CD8-positive, alpha-beta T cell (primary cell): ENCODE measurements at regions of chr4 and their contacts with region 1.

Region 1: DNA sequence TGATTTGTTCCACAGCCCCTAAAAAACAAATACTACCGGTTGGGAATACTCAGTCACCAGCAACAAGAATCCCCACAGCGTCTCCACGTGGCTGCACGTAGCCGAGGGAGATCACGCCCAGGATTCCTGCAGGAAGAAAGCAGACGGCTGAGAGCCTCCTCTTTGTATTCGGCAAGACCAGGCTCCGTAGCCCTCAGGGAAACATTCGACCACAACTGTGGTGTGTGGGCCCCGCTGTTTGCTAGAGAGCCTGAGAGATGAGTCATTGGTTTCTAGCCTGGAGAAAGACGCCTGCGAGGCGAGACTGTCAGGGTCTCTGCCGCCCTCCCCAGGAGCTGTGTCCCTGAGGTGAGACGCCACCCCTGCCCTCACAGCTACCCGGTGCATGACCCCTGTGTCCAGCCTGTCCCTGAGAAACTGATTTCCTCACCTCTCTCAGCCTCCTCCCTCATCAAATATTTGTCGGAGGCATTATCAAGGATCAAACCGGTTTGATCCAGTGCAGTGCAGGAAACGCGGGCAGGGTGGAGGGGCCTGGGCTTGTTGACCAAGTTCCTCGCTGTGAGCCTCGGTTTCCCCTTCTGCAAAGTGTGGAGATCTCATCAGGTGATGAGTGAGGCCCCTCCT is 4.7 kb upstream of the S100P start:
- DNase-seq: peak; percentile 53 to 89 (median 81)
- ATAC-seq: peak; percentile 79
- H3K4me3 ChIP-seq: peak overlapping the region; percentile 50 to 58
- H3K4me3 Mint-ChIP-seq: peak overlapping the region; percentile 82
- H3K27ac ChIP-seq: peak overlapping the region; percentile 58 to 75
- H3K27ac Mint-ChIP-seq: peak overlapping the region; percentile 94
- H3K4me1 ChIP-seq: peaks cover 61% of the 10 kb centered on the region
- H3K4me1 Mint-ChIP-seq: peaks cover 75% of the 10 kb centered on the region
- H3K27me3 ChIP-seq: no peaks in the 10 kb centered on the region
- H3K27me3 Mint-ChIP-seq: no peaks in the 10 kb centered on the region
- CTCF ChIP-seq: no peak

Region 2: DNA sequence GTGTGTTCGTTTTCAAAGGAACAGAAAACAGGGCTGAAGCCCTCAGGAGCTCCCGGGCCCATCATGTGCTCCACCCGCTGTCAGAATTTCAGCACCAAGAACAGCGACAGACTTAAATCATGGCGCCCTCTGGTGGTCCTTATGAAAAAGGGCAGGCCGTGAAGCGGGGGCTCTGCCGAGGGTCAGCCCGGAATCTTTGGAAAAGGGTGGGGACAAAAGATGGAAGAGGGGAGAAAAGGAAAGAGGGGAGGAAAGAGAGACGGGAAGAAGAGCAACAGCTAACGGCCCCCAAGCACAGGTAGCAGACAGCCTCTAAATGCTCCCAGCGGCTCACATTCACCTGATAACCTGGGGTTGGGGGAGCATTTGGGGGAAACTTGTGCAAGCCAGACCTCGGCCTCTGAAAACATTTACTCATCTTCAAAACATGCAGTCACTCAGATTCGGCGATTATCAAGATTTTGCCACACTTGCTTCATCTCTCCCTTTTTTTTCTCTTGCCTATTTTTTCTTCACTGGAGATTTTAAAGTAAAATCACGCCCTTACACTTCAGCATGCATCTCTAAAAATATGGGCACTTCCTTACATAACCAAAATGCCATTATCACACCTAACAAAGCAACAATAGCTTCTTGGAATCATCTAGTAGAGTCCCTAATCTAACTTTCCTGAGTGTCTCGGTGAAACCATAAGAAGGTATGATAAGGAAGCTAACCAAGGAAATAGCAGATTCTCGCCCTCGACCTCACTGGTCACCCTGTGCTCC is 142.1 kb before region 1 on chr4:
- CTCF ChIA-PET with region 1: no interaction called
- POLR2A ChIA-PET with region 1: no interaction called
- intact Hi-C with region 1: no loop called
- DNase-seq: peak in 8 of 9 experiments; percentile 28 to 80 (median 51)
- ATAC-seq: peak; percentile 69
- H3K4me3 ChIP-seq: no peak overlapping the region
- H3K4me3 Mint-ChIP-seq: no peak overlapping the region
- H3K27ac ChIP-seq: no peak overlapping the region
- H3K27ac Mint-ChIP-seq: no peak overlapping the region
- H3K4me1 ChIP-seq: no peaks in the 10 kb centered on the region
- H3K4me1 Mint-ChIP-seq: no peaks in the 10 kb centered on the region
- H3K27me3 ChIP-seq: peaks cover 0 to 2% of the 10 kb centered on the region in 2 experiments
- H3K27me3 Mint-ChIP-seq: peaks cover 45% of the 10 kb centered on the region
- CTCF ChIP-seq: peak; percentile 85

Region 3: DNA sequence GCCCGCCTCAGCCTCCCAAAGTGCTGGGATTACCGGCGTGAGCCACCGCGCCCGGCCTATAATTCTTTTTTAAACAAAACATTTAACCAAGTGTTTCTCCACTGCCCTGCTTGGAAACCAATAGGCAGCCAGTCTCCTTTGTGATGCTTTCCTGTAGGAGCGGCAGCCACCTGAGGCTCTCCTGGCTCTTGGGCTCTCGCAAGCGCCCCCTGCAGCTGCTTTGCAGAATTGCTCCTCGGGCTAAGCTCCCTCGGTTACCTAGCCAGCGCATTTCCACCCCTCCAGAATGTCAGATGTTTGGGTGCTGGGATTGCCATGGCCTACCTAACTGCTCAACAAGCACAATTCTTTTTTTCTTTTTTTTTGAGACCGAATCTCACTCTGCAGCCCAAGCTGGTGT is 12.4 kb after region 1 on chr4:
- CTCF ChIA-PET with region 1: interaction called, 35 read pairs
- POLR2A ChIA-PET with region 1: interaction called, 30 read pairs
- intact Hi-C with region 1: no loop called
- DNase-seq: peak in 5 of 9 experiments; percentile 41 to 66 (median 52)
- ATAC-seq: peak; percentile 34
- H3K4me3 ChIP-seq: no peak overlapping the region
- H3K4me3 Mint-ChIP-seq: no peak overlapping the region
- H3K27ac ChIP-seq: no peak overlapping the region
- H3K27ac Mint-ChIP-seq: no peak overlapping the region
- H3K4me1 ChIP-seq: peaks cover 54% of the 10 kb centered on the region
- H3K4me1 Mint-ChIP-seq: peaks cover 75% of the 10 kb centered on the region
- H3K27me3 ChIP-seq: no peaks in the 10 kb centered on the region
- H3K27me3 Mint-ChIP-seq: no peaks in the 10 kb centered on the region
- CTCF ChIP-seq: no peak

Region 4: DNA sequence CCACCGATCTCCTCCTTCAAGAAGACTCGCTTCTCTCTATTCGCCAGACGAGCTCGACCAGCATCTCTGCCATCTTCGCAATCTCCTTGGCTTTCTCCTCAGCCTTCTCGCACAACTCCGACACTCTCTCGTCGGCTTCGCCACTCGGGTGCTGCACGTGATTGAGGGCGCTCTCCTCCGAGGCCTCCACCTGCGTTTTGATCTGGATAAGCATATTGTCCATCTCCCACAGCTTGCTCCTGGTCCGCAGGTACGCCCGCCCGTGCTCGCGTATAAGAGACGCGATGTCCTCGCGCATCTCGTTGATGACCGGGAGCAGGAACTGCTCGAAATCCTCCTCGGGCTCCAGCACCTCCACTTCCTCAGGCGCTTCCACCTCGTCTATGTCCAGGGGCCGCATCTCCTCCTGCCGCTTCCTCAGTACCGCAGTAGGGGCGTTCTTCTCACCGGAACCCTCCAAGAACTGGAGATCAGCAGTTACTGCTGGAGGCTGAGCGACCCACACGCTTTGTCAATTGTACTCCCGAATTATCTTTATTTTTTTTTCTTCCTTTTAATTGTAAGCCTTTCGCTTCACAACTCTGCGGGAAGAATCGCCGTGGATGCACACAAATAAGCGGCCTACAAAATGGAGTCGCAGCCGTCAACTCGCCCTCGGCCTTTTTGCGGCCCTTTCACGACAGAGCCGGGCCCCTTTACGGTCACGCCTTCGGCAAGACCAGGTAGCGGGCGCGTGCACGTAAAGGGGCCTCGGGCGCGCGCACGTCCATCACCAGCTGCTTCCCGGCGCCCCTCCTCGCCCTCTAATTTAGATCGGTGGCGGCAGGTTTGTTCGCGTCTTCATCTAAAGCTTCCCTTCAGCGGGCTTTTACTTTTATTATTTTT is 20.5 kb after region 1 on chr4 and contains the start of gene MRFAP1L1:
- CTCF ChIA-PET with region 1: interaction called, 6 read pairs
- POLR2A ChIA-PET with region 1: interaction called, 40 read pairs
- intact Hi-C with region 1: loop called (anchors 1 to 2 kb)
- DNase-seq: peak; percentile 92 to 99 (median 97)
- ATAC-seq: peak; percentile 89
- H3K4me3 ChIP-seq: peak within 1 kb of the TSS; percentile 73 to 86
- H3K4me3 Mint-ChIP-seq: peak within 1 kb of the TSS; percentile 98
- H3K27ac ChIP-seq: peak within 1 kb of the TSS; percentile 79
- H3K27ac Mint-ChIP-seq: peak within 1 kb of the TSS; percentile 99
- H3K4me1 ChIP-seq: peaks cover 48% of the 10 kb centered on the region
- H3K4me1 Mint-ChIP-seq: peaks cover 65% of the 10 kb centered on the region
- H3K27me3 ChIP-seq: no peaks in the 10 kb centered on the region
- H3K27me3 Mint-ChIP-seq: no peaks in the 10 kb centered on the region
- CTCF ChIP-seq: no peak
- total RNA-seq, gene MRFAP1L1: 27.5 to 30.0 TPM

Region 5: GRCh38 chr4:6716018-6716911 is 27.3 kb after region 1 on chr4 and contains the start of gene BLOC1S4:
- CTCF ChIA-PET with region 1: interaction called, 5 read pairs
- POLR2A ChIA-PET with region 1: interaction called, 16 read pairs
- intact Hi-C with region 1: loop called in 1 of 2 experiments (anchors 2 kb)
- DNase-seq: peak; percentile 77 to 98 (median 88)
- ATAC-seq: peak; percentile 83
- H3K4me3 ChIP-seq: peak within 1 kb of the TSS; percentile 74 to 81
- H3K4me3 Mint-ChIP-seq: peak within 1 kb of the TSS; percentile 95
- H3K27ac ChIP-seq: peak within 1 kb of the TSS; percentile 75 to 80
- H3K27ac Mint-ChIP-seq: peak within 1 kb of the TSS; percentile 97
- H3K4me1 ChIP-seq: peaks cover 25% of the 10 kb centered on the region
- H3K4me1 Mint-ChIP-seq: peaks cover 48% of the 10 kb centered on the region
- H3K27me3 ChIP-seq: no peaks in the 10 kb centered on the region
- H3K27me3 Mint-ChIP-seq: no peaks in the 10 kb centered on the region
- CTCF ChIP-seq: peak; percentile 18
- total RNA-seq, gene BLOC1S4: 29.7 to 30.7 TPM